Ascending aorta (tissue), 2 donors: ENCODE measurements at regions of chr6 and their contacts with region 1.

Region 1: DNA sequence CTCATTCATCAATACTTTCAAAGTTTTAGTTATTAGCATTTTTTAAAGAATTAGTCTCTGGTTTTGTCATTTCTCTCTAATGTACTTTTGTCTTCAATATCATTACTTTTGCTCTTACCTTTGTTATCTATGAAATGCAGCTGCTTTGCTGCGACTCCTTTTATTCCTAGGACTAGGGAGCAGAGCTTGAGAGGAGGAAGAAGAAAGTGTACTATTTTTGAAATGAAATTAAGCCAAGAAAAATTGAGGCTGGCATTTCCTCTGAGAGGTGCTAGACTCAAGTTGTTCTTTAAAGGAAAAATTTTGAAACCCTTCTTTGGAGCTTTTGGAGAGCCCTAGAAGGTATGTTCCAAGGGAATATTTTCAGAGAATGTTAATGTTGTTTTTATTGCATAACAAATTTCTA is 48.3 kb upstream of the MRAP2 start:
- DNase-seq: no peak
- H3K4me3 ChIP-seq: no peak overlapping the region
- H3K27ac ChIP-seq: peak overlapping the region; percentile 84 to 85
- H3K4me1 ChIP-seq: peaks cover 4 to 29% of the 10 kb centered on the region in 2 donors
- H3K27me3 ChIP-seq: no peaks in the 10 kb centered on the region
- CTCF ChIP-seq: peak in 1 of 3 experiments; percentile 30

Region 2: GRCh38 chr6:83962582-83962981 is 22.7 kb before region 1 on chr6:
- intact Hi-C with region 1: no loop called
- DNase-seq: no peak
- H3K4me3 ChIP-seq: no peak overlapping the region
- H3K27ac ChIP-seq: no peak overlapping the region
- H3K4me1 ChIP-seq: no peaks in the 10 kb centered on the region
- H3K27me3 ChIP-seq: no peaks in the 10 kb centered on the region
- CTCF ChIP-seq: no peak

Region 3: DNA sequence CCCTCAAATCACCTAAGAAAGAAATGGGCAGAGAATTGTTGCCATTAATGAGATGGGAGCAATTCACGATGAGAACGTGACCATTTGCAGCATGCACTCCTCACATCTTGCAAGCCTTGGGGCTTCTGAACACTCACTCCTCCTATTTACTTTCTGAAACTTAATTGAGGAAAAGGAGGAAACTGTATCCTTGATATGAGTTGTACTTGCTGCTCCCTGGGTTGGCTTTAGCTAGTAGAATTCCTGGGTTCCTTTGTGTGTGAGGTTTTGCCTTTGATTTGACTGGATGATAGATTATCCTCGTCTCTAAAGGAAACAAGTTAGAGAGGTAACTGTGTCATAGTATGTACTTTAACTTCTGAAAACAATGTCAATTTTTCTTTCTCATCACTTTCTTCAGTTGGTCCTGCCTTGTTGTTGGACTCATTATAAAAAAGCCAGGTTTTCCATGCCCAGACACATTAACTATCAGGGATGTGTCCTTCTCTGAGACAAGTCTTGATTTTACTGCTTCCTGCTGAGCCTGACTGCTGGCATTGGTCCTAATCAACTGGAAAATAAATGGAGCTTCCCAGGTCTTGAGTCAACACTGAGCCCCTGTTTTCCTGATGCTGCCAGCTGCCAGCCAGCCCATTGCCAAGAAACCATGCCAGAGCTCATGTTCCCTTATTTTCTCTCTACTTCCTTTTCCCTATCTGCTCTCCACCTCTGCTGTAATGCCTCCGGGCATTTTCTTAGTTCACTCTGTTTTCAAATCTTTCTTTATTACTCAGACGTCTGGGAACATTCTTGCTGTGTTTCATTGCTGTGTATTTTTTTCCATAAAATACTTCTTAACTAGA is 42.2 kb after region 1 on chr6:
- intact Hi-C with region 1: loop called (anchors 2 kb)
- DNase-seq: peak in 1 of 2 donors; percentile 89
- H3K4me3 ChIP-seq: peak overlapping the region in 1 of 2 donors; percentile 28
- H3K27ac ChIP-seq: peak overlapping the region; percentile 96 to 97
- H3K4me1 ChIP-seq: peaks cover 0 to 44% of the 10 kb centered on the region in 2 donors
- H3K27me3 ChIP-seq: no peaks in the 10 kb centered on the region
- CTCF ChIP-seq: no peak

Region 4: GRCh38 chr6:84093441-84094435 is 108.4 kb after region 1 on chr6:
- intact Hi-C with region 1: loop called (anchors 2 kb)
- DNase-seq: no peak
- H3K4me3 ChIP-seq: no peak overlapping the region
- H3K27ac ChIP-seq: peak overlapping the region; percentile 45 to 63
- H3K4me1 ChIP-seq: peaks cover 2 to 21% of the 10 kb centered on the region in 2 donors
- H3K27me3 ChIP-seq: no peaks in the 10 kb centered on the region
- CTCF ChIP-seq: no peak

Region 5: DNA sequence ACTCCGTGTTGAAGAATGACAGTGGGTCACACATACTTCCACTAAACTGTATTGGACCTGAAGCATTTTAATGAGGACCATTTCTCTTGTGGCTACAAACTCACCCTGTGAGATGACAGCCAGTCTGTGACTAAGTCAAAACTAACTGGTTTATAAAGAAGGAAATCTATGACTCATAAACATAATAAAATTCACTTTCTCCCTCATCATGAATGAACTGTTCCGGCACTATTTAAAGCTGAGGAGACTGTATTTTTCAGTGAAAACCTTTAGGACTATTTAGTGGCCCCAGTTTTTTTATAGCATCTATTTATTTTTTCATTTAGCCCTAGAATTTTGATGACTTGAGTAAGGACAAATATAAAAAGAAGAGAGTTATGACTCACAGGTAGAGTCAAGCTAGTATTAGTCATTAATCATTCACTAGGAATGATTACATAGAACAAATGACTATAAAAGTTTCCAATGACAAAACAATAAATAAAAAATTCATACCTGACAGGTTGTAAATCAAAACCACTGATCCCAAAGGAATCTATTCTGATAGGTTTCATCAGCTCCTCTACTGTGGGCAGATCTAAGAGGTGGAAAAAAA is 207.9 kb after region 1 on chr6:
- intact Hi-C with region 1: loop called (anchors 2 kb)
- DNase-seq: no peak
- H3K4me3 ChIP-seq: no peak overlapping the region
- H3K27ac ChIP-seq: peak overlapping the region; percentile 66 to 69
- H3K4me1 ChIP-seq: peaks cover 0 to 6% of the 10 kb centered on the region in 2 donors
- H3K27me3 ChIP-seq: no peaks in the 10 kb centered on the region
- CTCF ChIP-seq: no peak

Region 6: DNA sequence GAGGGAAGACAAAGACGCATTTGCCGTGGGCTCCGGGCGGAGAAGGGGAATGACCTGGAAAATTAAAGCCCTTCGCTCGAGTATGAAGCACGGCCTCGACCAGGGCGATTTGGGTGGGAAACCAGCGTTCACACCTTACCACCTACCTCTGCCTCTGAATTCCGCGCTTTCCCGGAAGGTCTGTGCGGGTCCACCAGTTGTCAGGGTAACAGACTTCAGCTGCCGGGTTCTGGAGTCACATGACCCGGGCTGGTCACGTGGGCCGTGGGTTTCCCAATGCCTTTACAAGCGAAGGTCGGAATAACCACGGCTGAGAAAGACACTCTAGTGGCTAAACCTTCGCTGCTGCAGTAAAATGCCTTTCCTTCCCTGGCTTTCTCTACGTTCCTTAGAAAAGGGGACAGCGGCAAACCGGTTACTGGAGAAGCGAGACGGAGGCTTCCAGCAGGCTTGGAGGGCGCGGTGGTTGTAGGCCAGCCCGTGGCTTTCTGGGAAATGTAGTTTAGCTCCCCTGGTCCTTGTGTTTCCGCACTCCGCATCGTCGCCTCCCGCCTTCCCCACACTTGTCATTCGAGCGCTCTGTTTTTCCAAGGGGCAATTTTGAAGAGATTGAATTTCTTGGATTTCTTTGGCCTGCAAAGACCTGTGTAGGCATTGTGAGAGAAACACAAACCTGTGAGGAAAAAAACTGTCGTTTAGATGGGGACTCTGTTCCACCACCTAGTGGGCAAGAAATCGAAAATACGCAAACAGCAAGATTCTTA is 242.3 kb after region 1 on chr6 and contains the start of gene CEP162:
- intact Hi-C with region 1: loop called (anchors 5 kb)
- DNase-seq: peak; percentile 77 to 96
- H3K4me3 ChIP-seq: peak within 1 kb of the TSS; percentile 90 to 96
- H3K27ac ChIP-seq: peak within 1 kb of the TSS; percentile 76 to 77
- H3K4me1 ChIP-seq: no peaks in the 10 kb centered on the region
- H3K27me3 ChIP-seq: no peaks in the 10 kb centered on the region
- CTCF ChIP-seq: peak; percentile 72 to 82 (median 77)
- total RNA-seq, gene CEP162: 11.7 TPM